GM12878 (cell line): ENCODE measurements at regions of chr1 and their contacts with region 1.

Region 1: DNA sequence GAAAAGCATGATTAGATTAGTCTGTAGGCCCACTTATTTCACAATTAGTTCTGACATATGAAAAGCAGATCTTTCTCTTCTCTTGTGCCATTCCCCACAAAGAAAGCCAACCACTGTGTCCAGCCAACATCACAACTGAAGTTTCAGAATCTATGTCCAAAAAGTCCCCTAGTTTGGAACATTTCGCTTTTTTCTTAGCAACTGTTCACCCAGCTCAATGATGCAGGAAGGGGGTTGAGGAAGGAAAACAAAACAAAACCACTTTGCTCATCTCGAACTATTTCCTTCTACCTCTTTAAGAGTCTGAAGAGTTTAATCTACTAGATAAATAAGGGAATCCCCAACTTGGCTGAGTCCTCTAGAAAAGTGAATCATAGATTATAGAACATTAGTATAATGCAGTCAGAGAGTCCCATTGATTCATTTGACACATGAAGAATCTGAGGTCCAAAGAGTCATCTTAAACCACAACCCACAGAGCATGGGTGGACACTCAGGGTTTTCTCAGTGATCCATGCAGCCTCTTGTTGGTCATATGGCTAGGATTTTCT is 159.3 kb upstream of the SGIP1 start:
- DNase-seq: peak; percentile 96
- ATAC-seq: peak; percentile 66
- H3K4me3 ChIP-seq: no peak overlapping the region
- H3K27ac ChIP-seq: peak overlapping the region; percentile 92
- H3K4me1 ChIP-seq: peaks cover 65% of the 10 kb centered on the region
- H3K27me3 ChIP-seq: no peaks in the 10 kb centered on the region
- CTCF ChIP-seq: no peak
- EP300 ChIP-seq: peak; percentile 75 to 85; a peak in 3 of 4 replicates
- POLR2A ChIP-seq: no peak
- RAD21 ChIP-seq: peak; percentile 16

Region 2: DNA sequence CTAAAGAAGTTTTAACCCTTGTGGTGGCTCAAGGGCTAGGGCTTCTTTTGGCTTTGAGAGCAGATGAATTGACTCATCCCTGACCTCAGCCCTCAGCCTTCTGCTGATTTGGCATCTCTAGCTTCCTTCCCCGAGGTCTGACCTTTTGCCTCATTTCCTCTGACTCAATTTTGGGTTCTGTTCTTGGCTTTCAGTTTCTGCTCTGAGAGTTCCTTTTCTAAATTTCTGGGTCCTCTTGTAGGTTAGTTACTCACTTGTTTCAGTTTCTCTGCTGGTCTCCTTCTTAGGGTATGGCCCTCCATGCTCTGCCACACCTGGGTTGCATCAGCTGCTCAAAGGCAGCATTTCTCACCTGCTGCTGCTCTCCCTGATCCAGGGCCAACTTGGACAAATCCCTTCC is 562.6 kb before region 1 on chr1:
- CTCF ChIA-PET with region 1: no interaction called
- POLR2A ChIA-PET with region 1: no interaction called
- RAD21 ChIA-PET with region 1: no interaction called
- SMC1A ChIA-PET with region 1: no interaction called
- in situ Hi-C with region 1: no loop called
- intact Hi-C with region 1: loop called (anchors 10 kb)
- DNase-seq: peak; percentile 96
- ATAC-seq: peak; percentile 100
- H3K4me3 ChIP-seq: no peak overlapping the region
- H3K27ac ChIP-seq: no peak overlapping the region; the same call in 1 of the 2 replicates
- H3K4me1 ChIP-seq: peaks cover 8% of the 10 kb centered on the region
- H3K27me3 ChIP-seq: no peaks in the 10 kb centered on the region
- CTCF ChIP-seq: no peak
- EP300 ChIP-seq: peak in 1 of 2 experiments; percentile 26; a peak in 1 of 4 replicates
- POLR2A ChIP-seq: no peak
- RAD21 ChIP-seq: peak; percentile 11; the same call in 1 of the 2 replicates

Region 3: GRCh38 chr1:66271216-66271903 is 103.3 kb before region 1 on chr1:
- CTCF ChIA-PET with region 1: interaction called, 4 read pairs
- POLR2A ChIA-PET with region 1: no interaction called
- RAD21 ChIA-PET with region 1: interaction called, 6 read pairs
- SMC1A ChIA-PET with region 1: interaction called, 19 read pairs
- in situ Hi-C with region 1: no loop called
- intact Hi-C with region 1: no loop called
- DNase-seq: no peak
- ATAC-seq: peak; percentile 58
- H3K4me3 ChIP-seq: no peak overlapping the region
- H3K27ac ChIP-seq: no peak overlapping the region
- H3K4me1 ChIP-seq: peaks cover 21% of the 10 kb centered on the region
- H3K27me3 ChIP-seq: no peaks in the 10 kb centered on the region
- CTCF ChIP-seq: no peak
- EP300 ChIP-seq: peak; percentile 38 to 77; a peak in 1 of 4 replicates
- POLR2A ChIP-seq: no peak
- RAD21 ChIP-seq: no peak

Region 4: GRCh38 chr1:66350001-66350547 is 24.6 kb before region 1 on chr1:
- CTCF ChIA-PET with region 1: interaction called, 29 read pairs
- POLR2A ChIA-PET with region 1: interaction called, 10 read pairs
- RAD21 ChIA-PET with region 1: interaction called, 113 read pairs
- SMC1A ChIA-PET with region 1: interaction called, 463 read pairs
- in situ Hi-C with region 1: no loop called
- intact Hi-C with region 1: loop called (anchors 1 kb)
- DNase-seq: no peak
- ATAC-seq: peak; percentile 64
- H3K4me3 ChIP-seq: peak overlapping the region; percentile 52; the same call in 1 of the 2 replicates
- H3K27ac ChIP-seq: peak overlapping the region; percentile 88
- H3K4me1 ChIP-seq: peaks cover 56% of the 10 kb centered on the region
- H3K27me3 ChIP-seq: no peaks in the 10 kb centered on the region
- CTCF ChIP-seq: no peak
- EP300 ChIP-seq: peak; percentile 98 to 99
- POLR2A ChIP-seq: 0 out of 2 replicates have a peak, but pooled peaks have one; percentile 31
- RAD21 ChIP-seq: no peak

Region 5: DNA sequence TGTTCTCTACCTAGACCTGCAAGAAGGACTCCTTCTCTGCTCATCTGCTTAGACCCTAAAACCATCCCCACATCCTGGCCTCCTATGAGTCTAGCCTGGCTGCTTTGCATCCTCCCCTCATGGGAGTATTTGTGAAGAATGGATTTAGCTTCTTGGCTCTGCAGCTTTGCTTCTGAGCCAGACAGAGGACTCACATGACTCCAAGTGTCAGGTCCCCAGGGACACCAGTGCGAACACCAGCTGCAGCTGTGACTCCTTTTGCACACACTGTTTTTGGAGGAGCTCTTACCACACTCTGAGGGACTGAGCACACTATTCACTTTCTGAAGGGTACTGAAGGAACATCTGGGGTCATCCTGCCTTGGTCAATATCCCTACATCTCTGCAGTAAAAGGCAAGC is 27.6 kb after region 1 on chr1:
- CTCF ChIA-PET with region 1: interaction called, 32 read pairs
- POLR2A ChIA-PET with region 1: interaction called, 10 read pairs
- RAD21 ChIA-PET with region 1: interaction called, 74 read pairs
- SMC1A ChIA-PET with region 1: interaction called, 253 read pairs
- in situ Hi-C with region 1: no loop called
- intact Hi-C with region 1: loop called (anchors 1 kb)
- DNase-seq: peak; percentile 87
- ATAC-seq: peak; percentile 76
- H3K4me3 ChIP-seq: no peak overlapping the region
- H3K27ac ChIP-seq: peak overlapping the region; percentile 77
- H3K4me1 ChIP-seq: peaks cover 58% of the 10 kb centered on the region
- H3K27me3 ChIP-seq: no peaks in the 10 kb centered on the region
- CTCF ChIP-seq: no peak
- EP300 ChIP-seq: peak; percentile 88 to 95; a peak in 3 of 4 replicates
- POLR2A ChIP-seq: 0 out of 2 replicates have a peak, but pooled peaks have one; percentile 42
- RAD21 ChIP-seq: no peak

Region 6: DNA sequence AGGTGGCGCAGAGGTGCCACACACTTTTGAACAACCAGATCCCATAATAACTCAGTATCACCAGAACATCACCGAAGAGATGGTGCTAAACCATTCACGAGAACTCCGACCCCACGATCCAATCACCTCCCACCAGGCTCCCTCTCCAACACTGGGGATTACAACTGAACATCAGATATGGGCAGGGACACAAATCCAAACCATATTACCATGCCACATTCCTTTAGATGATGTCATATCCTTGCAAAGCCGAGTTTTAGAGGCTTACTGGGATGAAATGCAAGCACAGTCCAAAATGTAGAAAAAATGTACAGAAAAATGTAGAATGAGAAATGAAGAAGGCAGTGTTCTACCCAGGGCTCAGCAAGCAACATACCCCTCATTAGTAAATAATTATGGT is 224.0 kb after region 1 on chr1:
- CTCF ChIA-PET with region 1: no interaction called
- POLR2A ChIA-PET with region 1: no interaction called
- RAD21 ChIA-PET with region 1: no interaction called
- SMC1A ChIA-PET with region 1: no interaction called
- in situ Hi-C with region 1: no loop called
- intact Hi-C with region 1: no loop called
- DNase-seq: no peak
- ATAC-seq: no peak
- H3K4me3 ChIP-seq: no peak overlapping the region
- H3K27ac ChIP-seq: no peak overlapping the region
- H3K4me1 ChIP-seq: no peaks in the 10 kb centered on the region
- H3K27me3 ChIP-seq: no peaks in the 10 kb centered on the region; a peak in 1 of 4 replicates
- CTCF ChIP-seq: no peak
- EP300 ChIP-seq: no peak
- POLR2A ChIP-seq: no peak
- RAD21 ChIP-seq: no peak

Region 7: DNA sequence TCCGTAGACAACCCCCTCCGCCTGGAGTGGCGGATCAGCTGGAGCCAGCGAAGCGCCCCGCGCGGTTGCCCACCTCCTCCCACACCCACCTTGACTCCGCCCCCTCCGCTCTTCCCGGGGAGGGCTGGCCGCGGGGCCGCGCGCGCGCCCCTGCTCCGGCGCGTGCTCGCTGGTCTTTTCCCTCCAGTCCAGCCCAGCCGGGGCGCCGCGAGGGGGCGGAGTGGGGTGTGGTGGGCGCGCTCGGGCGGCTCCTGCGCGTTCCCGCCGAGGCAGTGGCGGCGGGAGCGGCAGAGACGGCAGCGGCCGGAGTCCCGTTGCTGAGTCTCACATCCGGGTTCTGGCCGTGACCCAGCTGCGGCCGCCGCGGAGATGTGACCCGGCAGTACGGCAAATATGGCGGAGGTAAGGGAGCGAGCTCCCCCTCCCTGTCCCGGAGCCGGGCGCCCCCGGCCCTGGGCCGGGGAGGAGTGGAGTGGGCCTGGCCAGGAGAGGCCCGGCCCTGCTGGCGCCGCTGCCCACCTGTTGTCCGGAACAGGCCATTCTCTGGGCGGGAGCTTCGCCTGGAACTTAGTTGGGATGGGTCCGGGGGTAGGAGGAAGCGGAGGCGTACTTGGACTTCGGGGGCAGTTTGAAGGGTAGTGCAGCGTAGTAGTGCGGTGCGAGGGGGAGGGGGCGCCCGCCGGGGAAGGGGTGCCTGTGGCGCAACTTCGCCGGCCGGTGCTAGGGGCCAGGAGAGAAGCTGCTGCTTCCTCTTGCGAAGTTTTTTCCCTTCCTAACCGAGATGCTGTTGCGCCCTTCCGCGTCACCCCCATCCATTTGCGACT is 555.6 kb after region 1 on chr1:
- CTCF ChIA-PET with region 1: no interaction called
- POLR2A ChIA-PET with region 1: no interaction called
- RAD21 ChIA-PET with region 1: no interaction called
- SMC1A ChIA-PET with region 1: no interaction called
- in situ Hi-C with region 1: loop called (anchors 25 kb)
- intact Hi-C with region 1: loop called (anchors 10 kb)
- DNase-seq: peak; percentile 61
- ATAC-seq: peak; percentile 76
- H3K4me3 ChIP-seq: peak overlapping the region; percentile 92
- H3K27ac ChIP-seq: peak overlapping the region; percentile 94
- H3K4me1 ChIP-seq: peaks cover 4% of the 10 kb centered on the region; the same call in 1 of the 2 replicates
- H3K27me3 ChIP-seq: no peaks in the 10 kb centered on the region
- CTCF ChIP-seq: peak; percentile 12 to 31 (median 18); a peak in 3 of 6 replicates
- EP300 ChIP-seq: no peak
- POLR2A ChIP-seq: peak; percentile 92
- RAD21 ChIP-seq: no peak